Mammary epithelial cell (primary cell): ENCODE measurements at regions of chr12 and their contacts with region 1.

Region 1: GRCh38 chr12:55073043-55074022 is 52.9 kb upstream of the OR9K2 start:
- DNase-seq: peak; percentile 36
- H3K4me3 ChIP-seq: no peak overlapping the region
- H3K27ac ChIP-seq: no peak overlapping the region
- H3K4me1 ChIP-seq: no peaks in the 10 kb centered on the region
- H3K27me3 ChIP-seq: peaks cover 4% of the 10 kb centered on the region
- CTCF ChIP-seq: peak; percentile 81 to 83

Region 2: DNA sequence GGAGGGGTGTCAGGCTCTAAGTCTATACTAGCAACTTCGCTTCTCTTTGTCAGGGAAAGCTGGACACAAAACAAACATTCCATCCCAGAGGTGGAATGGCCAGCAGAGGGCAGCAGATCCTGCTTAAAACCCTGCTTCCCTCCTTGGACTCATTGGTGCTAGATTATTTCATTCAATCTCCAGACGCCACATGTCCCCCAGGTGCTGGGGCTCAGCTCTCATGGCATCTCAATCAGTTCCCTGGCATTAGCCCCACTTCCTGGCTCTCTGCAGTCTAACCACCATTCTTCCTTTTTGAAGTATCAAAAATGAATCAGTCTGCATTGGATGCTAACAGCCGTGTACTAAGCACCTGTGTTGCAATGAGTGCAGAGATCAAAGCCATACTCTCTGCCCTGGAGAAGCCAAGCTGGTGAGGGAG is 476.8 kb before region 1 on chr12:
- CTCF ChIA-PET with region 1: no interaction called
- dilution Hi-C with region 1: no loop called
- in situ Hi-C with region 1: no loop called
- intact Hi-C with region 1: loop called (anchors 5 kb)
- DNase-seq: peak; percentile 43
- H3K4me3 ChIP-seq: no peak overlapping the region
- H3K27ac ChIP-seq: no peak overlapping the region
- H3K4me1 ChIP-seq: no peaks in the 10 kb centered on the region
- H3K27me3 ChIP-seq: peaks cover 5% of the 10 kb centered on the region
- CTCF ChIP-seq: peak; percentile 87 to 95

Region 3: DNA sequence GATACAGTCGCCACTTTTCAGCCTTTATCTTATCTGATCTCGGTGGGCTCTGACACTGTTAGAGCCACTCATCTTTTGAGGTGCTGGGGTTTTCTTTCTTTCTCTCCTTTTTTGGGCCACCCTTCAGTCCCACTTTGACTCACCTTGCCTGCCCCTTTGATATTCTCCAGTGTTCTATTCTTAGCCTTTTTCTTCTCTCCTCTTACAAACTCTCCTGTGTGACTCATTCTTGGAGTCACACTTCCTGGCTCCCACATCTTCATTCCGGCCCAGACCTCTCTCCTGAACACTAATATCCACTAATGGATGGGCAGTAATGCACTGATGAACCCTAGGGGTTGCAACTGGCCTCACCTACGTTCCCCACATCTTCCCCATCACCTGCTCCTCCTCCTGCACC is 422.9 kb before region 1 on chr12:
- CTCF ChIA-PET with region 1: no interaction called
- dilution Hi-C with region 1: no loop called
- in situ Hi-C with region 1: no loop called
- intact Hi-C with region 1: no loop called
- DNase-seq: peak; percentile 36
- H3K4me3 ChIP-seq: no peak overlapping the region
- H3K27ac ChIP-seq: no peak overlapping the region
- H3K4me1 ChIP-seq: no peaks in the 10 kb centered on the region
- H3K27me3 ChIP-seq: no peaks in the 10 kb centered on the region
- CTCF ChIP-seq: no peak

Region 4: GRCh38 chr12:54749191-54749818 is 324.0 kb before region 1 on chr12:
- CTCF ChIA-PET with region 1: no interaction called
- dilution Hi-C with region 1: no loop called
- in situ Hi-C with region 1: no loop called
- intact Hi-C with region 1: loop called (anchors 2 kb)
- DNase-seq: peak; percentile 28
- H3K4me3 ChIP-seq: no peak overlapping the region
- H3K27ac ChIP-seq: no peak overlapping the region
- H3K4me1 ChIP-seq: no peaks in the 10 kb centered on the region
- H3K27me3 ChIP-seq: no peaks in the 10 kb centered on the region
- CTCF ChIP-seq: peak; percentile 66 to 76

Region 5: GRCh38 chr12:54853995-54854566 is 219.3 kb before region 1 on chr12 and contains the start of gene MUCL1:
- CTCF ChIA-PET with region 1: no interaction called
- dilution Hi-C with region 1: no loop called
- in situ Hi-C with region 1: no loop called
- intact Hi-C with region 1: loop called (anchors 1 kb)
- DNase-seq: peak; percentile 71
- H3K4me3 ChIP-seq: no peak within 1 kb of the TSS
- H3K27ac ChIP-seq: no peak within 1 kb of the TSS
- H3K4me1 ChIP-seq: no peaks in the 10 kb centered on the region
- H3K27me3 ChIP-seq: no peaks in the 10 kb centered on the region
- CTCF ChIP-seq: peak; percentile 93 to 96
- total RNA-seq, gene MUCL1: not detected

Region 6: GRCh38 chr12:54998958-54999510 is 74.3 kb before region 1 on chr12:
- CTCF ChIA-PET with region 1: no interaction called
- dilution Hi-C with region 1: loop called (anchors 5 kb)
- in situ Hi-C with region 1: loop called (anchors 5 kb)
- intact Hi-C with region 1: no loop called
- DNase-seq: no peak
- H3K4me3 ChIP-seq: no peak overlapping the region
- H3K27ac ChIP-seq: no peak overlapping the region
- H3K4me1 ChIP-seq: no peaks in the 10 kb centered on the region
- H3K27me3 ChIP-seq: no peaks in the 10 kb centered on the region
- CTCF ChIP-seq: no peak